ENCODE measurements at regions of chr21 and their contacts with region 1.

Region 1: DNA sequence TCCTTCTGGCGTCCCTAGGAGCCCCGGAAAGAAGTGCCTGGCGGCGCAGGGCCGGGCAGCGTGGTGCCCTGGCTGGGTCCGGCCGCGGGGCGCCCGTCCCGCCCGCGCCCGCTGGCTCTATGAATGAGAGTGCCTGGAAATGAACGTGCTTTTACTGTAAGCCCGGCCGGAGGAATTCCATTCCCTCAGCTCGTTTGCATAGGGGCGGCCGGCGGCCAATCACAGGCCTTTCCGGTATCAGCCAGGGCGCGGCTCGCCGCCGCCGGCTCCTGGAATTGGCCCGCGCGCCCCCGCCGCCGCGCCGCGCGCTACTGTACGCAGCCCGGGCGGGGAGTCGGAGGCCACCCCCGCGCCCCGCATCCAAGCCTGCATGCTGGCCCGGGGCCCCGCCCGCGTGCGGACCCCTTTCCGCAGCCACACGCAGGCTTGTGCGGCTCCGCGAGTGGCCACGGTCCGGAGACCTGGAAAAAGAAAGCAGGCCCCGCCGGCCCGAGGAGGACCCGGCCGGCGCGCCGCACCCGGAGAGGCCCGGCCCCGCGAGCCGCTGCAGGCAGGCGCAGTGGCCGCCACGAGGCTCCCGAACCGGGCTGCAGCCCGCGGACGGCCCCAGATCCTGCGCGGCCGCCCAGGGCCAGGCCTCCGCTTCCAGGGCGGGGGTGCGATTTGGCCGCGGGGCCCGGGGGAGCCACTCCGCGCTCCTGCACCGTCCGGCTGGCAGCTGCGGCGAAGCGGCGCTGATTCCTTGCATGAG is 160.4 kb downstream of the RUNX1 start:
- DNase-seq: peak; percentile 86
- ATAC-seq: peak; percentile 76
- H3K4me3 ChIP-seq: peak overlapping the region; percentile 68 to 81
- H3K27ac ChIP-seq: peak overlapping the region; percentile 93
- H3K4me1 ChIP-seq: peaks cover 21 to 46% of the 10 kb centered on the region in 2 experiments
- H3K27me3 ChIP-seq: no peaks in the 10 kb centered on the region
- CTCF ChIP-seq: no peak
- POLR2A ChIP-seq: peak; percentile 62
- RAD21 ChIP-seq: no peak

Region 2: DNA sequence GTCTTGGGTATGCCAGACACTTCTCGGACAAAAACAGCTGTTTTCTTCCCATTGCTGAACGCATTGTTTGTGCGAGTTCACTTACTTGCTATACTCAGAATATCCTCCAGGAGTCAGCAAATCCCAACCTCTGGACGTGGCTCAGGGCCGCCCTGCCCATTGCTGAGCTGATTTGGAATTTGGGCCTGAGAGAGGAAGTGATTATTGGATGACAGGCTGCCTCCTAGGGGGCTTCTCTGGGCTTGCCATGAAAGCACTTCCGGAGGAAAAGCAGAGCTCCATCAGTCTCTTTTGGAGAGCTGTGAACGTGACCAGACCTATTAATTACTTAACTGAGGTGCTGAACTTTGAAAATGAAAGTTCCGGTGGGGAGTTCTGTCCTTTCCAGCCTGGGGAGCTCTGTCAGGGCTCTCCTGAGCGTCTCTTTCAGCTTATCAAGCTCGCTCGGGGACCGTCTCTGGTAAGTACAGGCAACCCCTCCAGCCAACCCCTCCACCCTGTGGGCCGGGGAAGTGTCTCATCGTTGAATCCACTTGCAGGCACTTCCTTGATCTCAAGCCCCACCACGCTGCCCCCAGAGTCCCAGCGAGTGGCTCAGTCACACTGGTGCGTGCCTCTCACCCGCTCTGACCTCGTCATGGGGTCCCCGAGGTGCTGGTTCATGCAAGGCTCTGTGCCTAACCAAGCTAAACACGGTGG is 143.0 kb before region 1 on chr21:
- CTCF ChIA-PET with region 1: interaction called, 31 read pairs
- POLR2A ChIA-PET with region 1: interaction called, 20 read pairs
- RAD21 ChIA-PET with region 1: interaction called, 12 to 23 read pairs
- intact Hi-C with region 1: loop called (anchors 1 kb)
- DNase-seq: peak; percentile 77
- ATAC-seq: peak; percentile 94
- H3K4me3 ChIP-seq: peak overlapping the region in 1 of 2 experiments; percentile 8; a peak in 3 of 4 replicates
- H3K27ac ChIP-seq: peak overlapping the region; percentile 36; the same call in 1 of the 2 replicates
- H3K4me1 ChIP-seq: peaks cover 7 to 18% of the 10 kb centered on the region in 2 experiments; a peak in 3 of 4 replicates
- H3K27me3 ChIP-seq: no peaks in the 10 kb centered on the region; the same call in 1 of the 2 replicates
- CTCF ChIP-seq: peak; percentile 82 to 94 (median 90)
- POLR2A ChIP-seq: no peak
- RAD21 ChIP-seq: peak; percentile 98

Region 3: DNA sequence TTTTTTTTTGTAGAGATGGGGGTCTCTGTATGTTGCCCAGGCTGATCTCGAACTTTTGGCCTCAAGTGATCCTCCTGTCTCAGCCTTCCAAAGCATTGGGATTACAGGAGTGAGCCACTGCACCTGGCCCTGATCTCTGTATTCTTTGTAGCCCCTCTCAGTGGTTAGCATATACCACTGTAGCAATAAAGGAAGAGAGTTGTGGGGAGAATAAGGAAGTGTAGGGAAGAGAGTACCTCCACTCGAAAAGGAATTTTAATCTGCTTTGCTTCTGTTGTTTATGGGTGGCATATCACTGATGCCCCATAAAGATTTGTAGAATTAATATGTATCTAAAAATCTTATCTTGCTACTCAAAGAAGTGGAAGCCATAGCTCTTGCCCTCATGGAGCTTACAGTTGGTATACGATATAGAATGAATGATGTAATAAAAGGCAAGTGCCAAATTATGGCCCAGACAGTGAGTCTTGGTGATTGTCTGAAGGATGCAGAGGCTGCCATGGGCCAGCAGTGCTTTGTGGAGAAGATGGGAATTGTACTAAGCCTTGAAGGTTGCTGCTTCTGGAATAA is 123.9 kb before region 1 on chr21:
- CTCF ChIA-PET with region 1: no interaction called
- POLR2A ChIA-PET with region 1: no interaction called
- RAD21 ChIA-PET with region 1: no interaction called
- intact Hi-C with region 1: no loop called
- DNase-seq: no peak
- ATAC-seq: no peak
- H3K4me3 ChIP-seq: no peak overlapping the region
- H3K27ac ChIP-seq: no peak overlapping the region
- H3K4me1 ChIP-seq: no peaks in the 10 kb centered on the region
- H3K27me3 ChIP-seq: no peaks in the 10 kb centered on the region
- CTCF ChIP-seq: no peak
- POLR2A ChIP-seq: no peak
- RAD21 ChIP-seq: no peak

Region 4: DNA sequence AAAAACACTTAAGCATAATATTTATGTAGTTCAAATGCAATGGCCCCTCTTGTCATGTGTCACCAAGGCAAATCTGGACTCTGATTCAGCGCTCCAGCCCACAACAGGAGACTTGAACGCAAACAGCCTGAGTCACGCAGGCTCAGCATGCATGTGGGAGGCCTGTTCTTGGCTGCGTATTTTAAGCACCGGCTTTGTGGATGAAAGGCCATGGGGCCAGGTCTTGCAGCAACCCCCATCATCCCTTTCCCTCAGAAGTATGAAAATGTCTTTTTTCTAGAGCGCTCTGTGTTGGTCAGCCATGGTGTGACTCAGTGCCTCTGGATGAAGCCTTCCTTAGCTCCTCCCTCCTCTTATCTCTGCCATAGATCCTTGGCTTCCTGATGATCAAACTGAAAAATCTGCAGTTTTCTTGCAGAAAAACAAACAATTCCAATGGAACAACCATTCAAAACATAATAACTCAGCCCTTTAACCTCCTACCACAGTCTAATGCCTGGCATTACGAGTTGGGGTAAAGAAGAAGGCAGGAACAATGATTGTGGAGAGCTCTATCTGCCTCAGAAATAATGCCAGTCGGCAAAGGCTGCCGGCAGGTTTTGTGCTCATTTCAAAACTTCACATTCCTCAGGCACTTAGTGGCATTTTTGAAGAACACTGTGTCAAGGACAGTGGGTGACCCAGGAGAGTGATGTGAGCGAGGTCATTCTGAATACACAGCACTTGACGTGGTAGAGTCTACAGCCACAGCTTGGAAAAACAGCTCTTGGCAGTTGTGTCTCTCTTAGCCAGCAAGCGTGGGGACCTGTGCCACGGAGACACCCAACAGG is 52.4 kb before region 1 on chr21:
- CTCF ChIA-PET with region 1: interaction called, 8 read pairs
- POLR2A ChIA-PET with region 1: interaction called, 5 read pairs
- RAD21 ChIA-PET with region 1: no interaction called
- intact Hi-C with region 1: loop called (anchors 1 kb)
- DNase-seq: peak; percentile 97
- ATAC-seq: peak; percentile 95
- H3K4me3 ChIP-seq: peak overlapping the region; percentile 23 to 35
- H3K27ac ChIP-seq: peak overlapping the region; percentile 79
- H3K4me1 ChIP-seq: peaks cover 36 to 49% of the 10 kb centered on the region in 2 experiments
- H3K27me3 ChIP-seq: no peaks in the 10 kb centered on the region
- CTCF ChIP-seq: no peak
- POLR2A ChIP-seq: no peak
- RAD21 ChIP-seq: no peak

Region 5: DNA sequence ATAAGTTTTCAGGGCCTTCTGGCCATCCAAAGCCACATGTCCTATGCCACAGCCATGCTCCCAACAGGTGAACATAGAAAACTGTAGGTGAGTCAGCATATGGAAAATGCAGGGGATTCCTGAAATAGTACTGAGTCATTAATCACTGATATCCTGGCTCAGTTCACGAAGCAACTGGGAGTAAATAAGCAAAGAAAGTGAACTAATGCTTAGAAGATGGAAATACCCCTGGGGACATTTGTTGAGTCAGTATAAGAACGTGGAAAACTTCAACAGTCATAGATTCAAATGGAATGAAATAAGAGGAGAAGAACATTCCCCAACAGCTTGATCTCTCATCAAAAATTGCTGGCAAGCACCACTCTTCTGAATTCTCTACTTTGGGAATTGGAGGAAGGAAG is 309.3 kb after region 1 on chr21:
- CTCF ChIA-PET with region 1: interaction called, 3 read pairs
- POLR2A ChIA-PET with region 1: no interaction called
- RAD21 ChIA-PET with region 1: no interaction called
- intact Hi-C with region 1: loop called (anchors 5 kb)
- DNase-seq: peak; percentile 64
- ATAC-seq: peak; percentile 75
- H3K4me3 ChIP-seq: no peak overlapping the region
- H3K27ac ChIP-seq: peak overlapping the region; percentile 40; the same call in 1 of the 2 replicates
- H3K4me1 ChIP-seq: peaks cover 7 to 34% of the 10 kb centered on the region in 2 experiments
- H3K27me3 ChIP-seq: no peaks in the 10 kb centered on the region
- CTCF ChIP-seq: no peak
- POLR2A ChIP-seq: no peak
- RAD21 ChIP-seq: 0 out of 2 replicates have a peak, but pooled peaks have one; percentile 7

Region 6: DNA sequence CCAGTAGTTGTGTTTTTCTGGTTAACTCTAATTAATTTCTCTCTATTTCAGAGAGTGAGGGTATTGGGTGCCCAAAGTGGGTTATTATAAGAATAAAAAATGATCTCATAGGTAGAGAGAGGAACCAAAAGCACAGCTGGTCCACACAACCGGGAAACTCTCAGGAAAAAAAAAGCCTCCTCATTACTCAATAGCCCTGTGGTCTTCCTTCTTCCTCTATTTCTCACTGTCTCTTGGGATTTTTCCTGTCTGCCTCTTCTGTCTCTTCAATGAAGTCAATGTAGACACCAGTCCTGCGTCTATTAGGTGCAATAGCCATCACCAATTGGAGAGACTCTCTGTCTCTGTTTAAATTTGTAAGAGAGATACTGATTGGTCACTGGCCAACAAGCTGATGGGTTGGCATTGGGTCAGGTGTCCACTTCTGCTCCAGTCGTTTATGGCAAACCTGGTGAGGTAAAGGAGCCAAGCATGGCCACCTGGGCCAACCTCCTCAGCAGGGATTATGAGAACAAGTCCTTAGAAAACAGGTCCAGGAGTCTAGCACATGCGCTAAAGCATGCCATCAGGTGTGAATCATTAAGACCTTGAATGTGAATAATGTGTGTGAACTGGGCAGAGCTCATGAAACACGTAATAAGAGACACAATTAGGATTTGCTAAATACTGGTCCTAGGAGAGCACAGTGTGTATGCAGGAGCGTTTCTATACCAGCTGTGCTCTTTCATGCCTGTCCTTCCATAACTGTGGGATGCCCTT is 603.4 kb after region 1 on chr21:
- CTCF ChIA-PET with region 1: no interaction called
- POLR2A ChIA-PET with region 1: no interaction called
- RAD21 ChIA-PET with region 1: no interaction called
- intact Hi-C with region 1: no loop called
- DNase-seq: no peak
- ATAC-seq: no peak
- H3K4me3 ChIP-seq: no peak overlapping the region
- H3K27ac ChIP-seq: no peak overlapping the region
- H3K4me1 ChIP-seq: no peaks in the 10 kb centered on the region
- H3K27me3 ChIP-seq: no peaks in the 10 kb centered on the region
- CTCF ChIP-seq: no peak
- POLR2A ChIP-seq: no peak
- RAD21 ChIP-seq: no peak

Region 7: GRCh38 chr21:35508139-35508888 is 619.6 kb after region 1 on chr21:
- CTCF ChIA-PET with region 1: interaction called, 6 read pairs
- POLR2A ChIA-PET with region 1: no interaction called
- RAD21 ChIA-PET with region 1: interaction called, 3 to 8 read pairs
- intact Hi-C with region 1: loop called (anchors 2 kb)
- DNase-seq: peak; percentile 58
- ATAC-seq: peak; percentile 96
- H3K4me3 ChIP-seq: no peak overlapping the region
- H3K27ac ChIP-seq: no peak overlapping the region
- H3K4me1 ChIP-seq: peaks cover 0 to 5% of the 10 kb centered on the region in 2 experiments; a peak in 1 of 4 replicates
- H3K27me3 ChIP-seq: peaks cover 6% of the 10 kb centered on the region; the same call in 1 of the 2 replicates
- CTCF ChIP-seq: peak; percentile 38 to 54 (median 46); a peak in 4 of 6 replicates
- POLR2A ChIP-seq: no peak
- RAD21 ChIP-seq: peak; percentile 70